ENCODE measurements at regions of chr22 and their contacts with region 1.

Region 1: GRCh38 chr22:21712894-21713712 is 22.5 kb downstream of the YPEL1 start:
- DNase-seq: peak; percentile 71
- ATAC-seq: peak; percentile 96
- H3K4me3 Mint-ChIP-seq: no peak overlapping the region
- H3K27ac Mint-ChIP-seq: no peak overlapping the region
- H3K4me1 Mint-ChIP-seq: peaks cover 10% of the 10 kb centered on the region
- H3K27me3 Mint-ChIP-seq: no peaks in the 10 kb centered on the region

Region 2: DNA sequence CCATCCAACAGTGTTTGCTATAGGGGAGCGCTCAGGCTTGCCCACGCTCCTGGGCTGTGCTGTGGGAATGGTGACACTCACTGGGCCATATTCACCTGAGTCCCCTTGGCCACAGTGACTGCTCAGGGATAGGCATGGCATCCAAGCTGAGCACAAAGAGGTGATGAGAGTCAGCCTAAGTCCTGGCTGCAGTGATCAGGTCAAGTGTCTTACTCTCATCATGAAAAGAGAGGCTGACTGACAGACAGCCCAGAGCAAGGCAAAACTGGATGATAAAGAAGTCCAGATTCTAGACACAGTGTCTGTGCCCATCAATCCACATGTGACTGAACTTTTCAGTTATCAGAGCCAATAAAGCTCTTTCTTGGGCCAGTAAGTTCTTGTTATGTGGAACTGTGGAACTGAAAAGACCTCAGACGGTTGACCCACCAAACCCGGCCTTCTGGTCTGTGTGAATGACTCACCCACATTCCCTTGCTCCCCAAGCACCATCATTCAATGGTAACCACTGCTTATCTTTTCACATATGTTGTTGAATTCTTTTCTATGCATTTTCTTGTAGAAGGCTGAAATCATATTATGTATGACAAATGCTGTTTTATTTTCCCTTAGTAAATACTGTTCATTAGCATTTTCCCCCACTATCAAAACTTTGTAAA is 65.7 kb after region 1 on chr22:
- CTCF ChIA-PET with region 1: no interaction called
- POLR2A ChIA-PET with region 1: no interaction called
- intact Hi-C with region 1: no loop called
- DNase-seq: no peak
- ATAC-seq: no peak
- H3K4me3 Mint-ChIP-seq: no peak overlapping the region
- H3K27ac Mint-ChIP-seq: no peak overlapping the region
- H3K4me1 Mint-ChIP-seq: no peaks in the 10 kb centered on the region
- H3K27me3 Mint-ChIP-seq: no peaks in the 10 kb centered on the region

Region 3: DNA sequence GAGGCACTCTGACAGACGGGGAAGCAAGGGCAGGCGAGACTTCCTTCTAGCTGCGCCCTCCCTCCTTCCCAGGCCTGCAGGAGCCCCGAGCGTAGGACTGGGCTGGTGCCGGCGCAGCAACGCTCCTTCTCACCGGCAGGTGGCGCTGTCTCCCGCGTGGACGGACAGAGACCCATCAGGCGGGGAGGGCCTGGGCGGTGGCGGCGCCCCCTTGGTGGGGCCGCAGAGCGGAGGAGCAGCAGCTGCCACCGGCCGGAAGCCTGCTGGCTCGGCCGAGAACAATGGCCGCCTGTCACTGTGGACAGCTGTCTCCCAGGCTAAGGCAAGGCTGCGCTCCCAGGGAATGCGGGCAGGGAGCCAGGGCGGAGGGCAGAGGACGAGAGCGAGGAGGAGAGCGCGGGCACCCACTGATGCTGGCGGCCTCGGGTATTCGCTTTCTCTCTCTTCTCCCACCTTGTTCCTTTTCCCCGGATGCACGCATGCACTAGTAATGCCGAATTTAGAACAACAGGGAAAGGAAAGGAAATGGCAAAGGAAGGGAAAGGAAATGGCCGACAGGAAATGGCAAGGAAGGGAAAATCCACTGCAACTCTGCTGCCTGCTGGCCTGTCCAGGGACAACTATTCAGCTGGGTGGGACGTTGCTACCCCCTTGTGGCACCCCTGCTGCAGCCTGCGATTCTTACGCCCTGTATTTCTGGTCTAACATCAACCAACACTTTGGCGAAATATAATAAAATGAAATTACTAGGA is 225.1 kb after region 1 on chr22:
- CTCF ChIA-PET with region 1: interaction called, 4 read pairs
- POLR2A ChIA-PET with region 1: no interaction called
- intact Hi-C with region 1: loop called (anchors 1 kb)
- DNase-seq: peak; percentile 95
- ATAC-seq: peak; percentile 95
- H3K4me3 Mint-ChIP-seq: peak overlapping the region; percentile 67
- H3K27ac Mint-ChIP-seq: peak overlapping the region; percentile 79
- H3K4me1 Mint-ChIP-seq: peaks cover 43% of the 10 kb centered on the region
- H3K27me3 Mint-ChIP-seq: no peaks in the 10 kb centered on the region

Region 4: GRCh38 chr22:22431271-22432220 is 718.4 kb after region 1 on chr22:
- CTCF ChIA-PET with region 1: no interaction called
- POLR2A ChIA-PET with region 1: no interaction called
- intact Hi-C with region 1: no loop called
- DNase-seq: peak; percentile 80
- ATAC-seq: peak; percentile 88
- H3K4me3 Mint-ChIP-seq: no peak overlapping the region
- H3K27ac Mint-ChIP-seq: no peak overlapping the region
- H3K4me1 Mint-ChIP-seq: no peaks in the 10 kb centered on the region
- H3K27me3 Mint-ChIP-seq: peaks cover 13% of the 10 kb centered on the region